ENCODE measurements at regions of chr2 and their contacts with region 1.

Region 1: GRCh38 chr2:31523871-31524492 is 56.8 kb downstream of the SRD5A2 start:
- DNase-seq: peak; percentile 56
- ATAC-seq: peak; percentile 90
- H3K4me3 ChIP-seq: no peak overlapping the region
- H3K27ac ChIP-seq: no peak overlapping the region
- H3K4me1 ChIP-seq: no peaks in the 10 kb centered on the region
- H3K27me3 ChIP-seq: peaks cover 0 to 38% of the 10 kb centered on the region in 2 experiments; a peak in 2 of 5 replicates
- CTCF ChIP-seq: peak; percentile 69
- EP300 ChIP-seq: no peak
- POLR2A ChIP-seq: no peak
- RAD21 ChIP-seq: no peak

Region 2: GRCh38 chr2:31413862-31414550 is 110.0 kb before region 1 on chr2:
- CTCF ChIA-PET with region 1: interaction called, 5 read pairs
- POLR2A ChIA-PET with region 1: no interaction called
- in situ Hi-C with region 1: no loop called
- intact Hi-C with region 1: loop called (anchors 5 kb)
- DNase-seq: no peak
- ATAC-seq: peak; percentile 80
- H3K4me3 ChIP-seq: no peak overlapping the region
- H3K27ac ChIP-seq: no peak overlapping the region
- H3K4me1 ChIP-seq: no peaks in the 10 kb centered on the region
- H3K27me3 ChIP-seq: no peaks in the 10 kb centered on the region; a peak in 1 of 5 replicates
- CTCF ChIP-seq: peak; percentile 25
- EP300 ChIP-seq: no peak
- POLR2A ChIP-seq: no peak
- RAD21 ChIP-seq: no peak

Region 3: GRCh38 chr2:31504311-31504710 is 19.7 kb before region 1 on chr2:
- CTCF ChIA-PET with region 1: no interaction called
- POLR2A ChIA-PET with region 1: no interaction called
- in situ Hi-C with region 1: no loop called
- intact Hi-C with region 1: no loop called
- DNase-seq: no peak
- ATAC-seq: no peak
- H3K4me3 ChIP-seq: no peak overlapping the region
- H3K27ac ChIP-seq: no peak overlapping the region
- H3K4me1 ChIP-seq: no peaks in the 10 kb centered on the region
- H3K27me3 ChIP-seq: no peaks in the 10 kb centered on the region
- CTCF ChIP-seq: no peak
- EP300 ChIP-seq: no peak
- POLR2A ChIP-seq: no peak
- RAD21 ChIP-seq: no peak